ENCODE measurements at regions of chr5 and their contacts with region 1.

Region 1: DNA sequence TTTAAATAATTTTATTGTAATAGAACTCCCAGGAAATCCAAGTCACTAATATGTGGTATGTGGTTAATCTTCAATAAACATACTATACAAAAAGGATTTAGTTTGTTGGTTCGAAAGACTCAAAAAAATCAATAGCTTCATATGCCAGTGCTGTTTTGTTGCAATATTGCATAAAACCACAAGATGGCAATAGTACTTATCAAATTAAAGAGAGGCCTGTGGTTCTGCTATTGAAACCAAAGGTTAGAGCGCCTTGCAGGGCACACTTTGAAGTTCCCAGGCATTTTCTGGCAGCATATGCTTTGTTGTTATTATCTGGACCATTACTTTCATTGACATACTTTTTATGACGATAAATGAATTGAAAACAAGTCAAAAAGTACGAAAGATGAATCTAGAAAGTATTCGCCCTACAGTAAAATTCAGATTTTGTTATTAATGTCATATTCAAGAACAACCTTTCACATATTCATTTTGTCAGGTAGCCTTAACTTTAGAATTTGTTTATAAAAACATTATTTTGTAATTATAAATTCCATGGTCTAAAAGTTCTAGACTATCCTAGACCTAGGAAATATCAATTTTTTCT is 316.3 kb downstream of the MCTP1 start:
- DNase-seq: no peak
- H3K4me3 ChIP-seq: no peak overlapping the region
- H3K27ac ChIP-seq: no peak overlapping the region
- H3K4me1 ChIP-seq: no peaks in the 10 kb centered on the region
- H3K27me3 ChIP-seq: no peaks in the 10 kb centered on the region
- CTCF ChIP-seq: peak in 2 of 3 experiments; percentile 47 to 60

Region 2: DNA sequence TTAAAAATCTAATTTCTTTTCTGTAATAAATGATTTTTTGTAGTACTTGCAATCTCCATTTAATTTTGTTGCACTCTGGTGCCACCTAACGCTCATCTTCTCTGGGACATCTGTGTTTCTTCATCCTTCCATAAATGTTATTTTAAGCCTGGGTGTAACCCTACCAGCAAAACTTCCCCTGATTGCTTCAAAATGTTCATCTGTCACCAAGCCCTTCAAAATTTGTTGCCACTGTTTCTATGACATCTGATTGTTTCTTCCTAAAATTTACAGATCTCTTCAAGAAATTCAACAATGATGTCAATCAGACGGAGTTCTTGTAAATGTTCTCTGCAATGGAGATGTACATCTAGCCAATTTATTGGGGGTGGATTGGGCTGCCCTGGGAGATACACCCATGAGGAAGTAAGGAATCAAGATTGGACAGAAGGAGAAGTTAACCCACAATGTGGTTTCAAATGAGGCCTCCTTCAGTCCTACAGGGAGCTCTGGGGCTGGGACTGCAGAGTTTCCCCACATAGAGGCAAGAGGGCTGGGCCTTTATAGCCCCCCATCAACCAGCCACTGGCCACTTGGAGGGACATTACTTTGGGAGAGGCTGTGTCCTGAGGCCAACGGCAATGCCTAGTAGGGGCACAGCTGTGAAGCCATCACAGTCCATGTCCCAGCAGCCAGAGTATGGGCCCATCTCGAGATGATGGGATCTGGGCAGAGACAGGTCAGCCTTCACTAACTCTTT is 293.0 kb after region 1 on chr5:
- dilution Hi-C with region 1: loop called (anchors 25 kb)
- DNase-seq: no peak
- H3K4me3 ChIP-seq: no peak overlapping the region
- H3K27ac ChIP-seq: no peak overlapping the region
- H3K4me1 ChIP-seq: no peaks in the 10 kb centered on the region
- H3K27me3 ChIP-seq: no peaks in the 10 kb centered on the region
- CTCF ChIP-seq: peak; percentile 12 to 38 (median 38)

Region 3: GRCh38 chr5:95304711-95305110 is 336.1 kb after region 1 on chr5:
- dilution Hi-C with region 1: no loop called
- DNase-seq: no peak
- H3K4me3 ChIP-seq: no peak overlapping the region
- H3K27ac ChIP-seq: no peak overlapping the region
- H3K4me1 ChIP-seq: no peaks in the 10 kb centered on the region
- H3K27me3 ChIP-seq: no peaks in the 10 kb centered on the region
- CTCF ChIP-seq: no peak